A549 (cell line): ENCODE measurements at regions of chr19 and their contacts with region 1.

Region 1: GRCh38 chr19:50046649-50047503 is 21.1 kb downstream of the ZNF473 start:
- DNase-seq: peak in 1 of 2 experiments; percentile 65
- ATAC-seq: no peak
- H3K4me3 ChIP-seq: no peak overlapping the region
- H3K27ac ChIP-seq: no peak overlapping the region
- H3K4me1 ChIP-seq: no peaks in the 10 kb centered on the region
- CTCF ChIP-seq: peak; percentile 26
- EP300 ChIP-seq: no peak
- POLR2A ChIP-seq: no peak
- RAD21 ChIP-seq: peak in 1 of 2 experiments; percentile 60; a peak in 2 of 5 replicates

Region 2: DNA sequence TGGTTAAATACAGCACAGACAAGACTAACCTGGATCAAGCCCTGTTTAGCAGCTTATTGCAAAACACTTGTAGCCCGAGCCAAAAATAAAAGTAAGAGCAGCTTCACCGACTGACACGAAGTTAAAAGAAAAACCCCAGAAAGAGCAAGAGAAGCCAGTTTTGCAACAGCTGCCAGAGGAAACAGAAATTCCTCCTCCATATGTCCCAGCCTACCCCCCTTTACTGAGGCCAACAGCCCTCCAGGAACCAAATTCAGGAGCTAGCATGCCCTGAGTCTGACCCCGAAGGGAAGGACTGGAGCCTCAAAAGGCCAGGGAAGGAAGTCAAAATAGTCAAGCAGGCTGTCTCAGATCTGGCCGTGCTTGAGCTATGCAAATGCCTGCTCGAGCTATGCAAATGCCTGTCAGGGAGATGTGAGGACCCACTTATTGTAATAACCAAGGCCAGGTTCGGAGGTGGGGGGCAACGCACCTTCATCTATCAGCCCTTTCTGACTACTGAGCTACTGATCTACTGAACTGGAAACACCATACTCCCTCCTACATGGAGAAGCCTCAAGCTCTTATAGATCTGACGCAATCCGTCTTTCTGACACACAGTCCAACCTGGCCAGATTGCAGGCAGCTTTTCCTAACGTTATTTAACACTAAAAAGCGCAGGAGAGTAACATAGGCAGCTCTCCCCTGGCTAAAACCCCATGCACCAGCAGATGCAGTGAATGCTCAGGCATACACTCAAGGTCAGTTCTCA is 92.6 kb before region 1 on chr19:
- CTCF ChIA-PET with region 1: no interaction called
- POLR2A ChIA-PET with region 1: no interaction called
- DNase-seq: no peak
- ATAC-seq: no peak
- H3K4me3 ChIP-seq: no peak overlapping the region
- H3K27ac ChIP-seq: no peak overlapping the region
- H3K4me1 ChIP-seq: no peaks in the 10 kb centered on the region
- CTCF ChIP-seq: no peak
- EP300 ChIP-seq: no peak
- POLR2A ChIP-seq: no peak
- RAD21 ChIP-seq: no peak

Region 3: DNA sequence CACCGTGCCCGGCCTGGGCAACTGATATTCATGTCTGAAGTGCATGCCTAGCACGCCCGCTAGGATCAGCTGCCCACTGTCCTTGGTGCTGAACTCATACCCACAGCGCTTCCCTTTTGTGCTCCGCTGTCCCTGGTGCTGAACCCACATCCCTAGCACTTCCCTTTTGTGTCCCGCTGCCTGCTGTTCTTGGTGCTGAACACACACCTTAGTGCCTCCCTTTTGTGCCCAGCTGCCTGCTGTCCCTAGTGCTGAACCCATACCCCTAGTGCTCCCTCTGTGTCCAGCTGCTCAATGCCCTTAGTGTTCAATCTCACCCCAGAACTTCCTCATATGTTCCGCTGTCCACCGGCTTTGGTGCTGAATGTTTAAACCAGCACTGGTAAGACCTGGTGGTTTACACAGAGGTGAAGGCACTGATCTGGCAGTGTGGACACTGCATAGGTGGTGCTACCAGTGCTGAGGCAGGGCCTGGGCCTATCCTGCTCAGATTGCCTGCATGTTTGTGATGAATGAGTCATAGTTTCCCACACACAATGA is 59.6 kb before region 1 on chr19:
- CTCF ChIA-PET with region 1: no interaction called
- POLR2A ChIA-PET with region 1: no interaction called
- DNase-seq: peak; percentile 58 to 89
- ATAC-seq: peak; percentile 55 to 61
- H3K4me3 ChIP-seq: no peak overlapping the region
- H3K27ac ChIP-seq: no peak overlapping the region
- H3K4me1 ChIP-seq: no peaks in the 10 kb centered on the region
- CTCF ChIP-seq: no peak
- EP300 ChIP-seq: no peak
- POLR2A ChIP-seq: no peak
- RAD21 ChIP-seq: no peak

Region 4: GRCh38 chr19:50065938-50066337 is 19.1 kb after region 1 on chr19:
- CTCF ChIA-PET with region 1: interaction called, 11 read pairs
- POLR2A ChIA-PET with region 1: no interaction called
- DNase-seq: no peak
- ATAC-seq: no peak
- H3K4me3 ChIP-seq: no peak overlapping the region
- H3K27ac ChIP-seq: no peak overlapping the region
- H3K4me1 ChIP-seq: no peaks in the 10 kb centered on the region
- CTCF ChIP-seq: no peak
- EP300 ChIP-seq: no peak
- POLR2A ChIP-seq: no peak
- RAD21 ChIP-seq: no peak